ENCODE measurements at regions of chr14 and their contacts with region 1.

Region 1: DNA sequence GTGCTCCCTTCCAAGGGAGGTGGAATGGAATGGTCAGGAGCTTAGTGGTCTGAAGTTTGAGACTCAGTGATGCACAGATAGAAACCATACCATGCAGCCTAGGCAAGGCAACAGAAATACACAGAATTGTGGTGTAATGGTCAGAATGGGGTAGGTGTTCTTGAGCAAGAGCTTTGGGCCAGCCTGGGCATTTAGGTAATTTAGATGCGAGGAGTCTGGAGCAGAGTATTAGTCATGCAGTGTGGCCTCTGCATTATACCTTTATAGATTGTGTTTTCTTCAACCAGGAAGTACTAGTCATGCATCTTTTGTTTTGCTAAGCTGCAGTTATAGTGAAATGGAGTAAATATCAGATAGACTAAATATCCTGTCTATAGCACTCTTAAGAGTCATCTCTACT is 118.3 kb downstream of the DAAM1 start:
- DNase-seq: peak; percentile 90
- H3K4me3 ChIP-seq: no peak overlapping the region
- H3K27ac ChIP-seq: peak overlapping the region; percentile 89
- H3K4me1 ChIP-seq: peaks cover 51% of the 10 kb centered on the region
- H3K27me3 ChIP-seq: no peaks in the 10 kb centered on the region
- CTCF ChIP-seq: no peak
- POLR2A ChIP-seq: peak; percentile 20

Region 2: GRCh38 chr14:59126710-59127432 is 179.9 kb before region 1 on chr14:
- CTCF ChIA-PET with region 1: no interaction called
- POLR2A ChIA-PET with region 1: no interaction called
- dilution Hi-C with region 1: no loop called
- intact Hi-C with region 1: no loop called
- DNase-seq: peak; percentile 64
- H3K4me3 ChIP-seq: no peak overlapping the region
- H3K27ac ChIP-seq: no peak overlapping the region
- H3K4me1 ChIP-seq: no peaks in the 10 kb centered on the region
- H3K27me3 ChIP-seq: peaks cover 5 to 6% of the 10 kb centered on the region in 2 experiments
- CTCF ChIP-seq: peak; percentile 58 to 60
- POLR2A ChIP-seq: no peak

Region 3: GRCh38 chr14:59254942-59255545 is 51.7 kb before region 1 on chr14:
- CTCF ChIA-PET with region 1: no interaction called
- POLR2A ChIA-PET with region 1: no interaction called
- dilution Hi-C with region 1: no loop called
- intact Hi-C with region 1: no loop called
- DNase-seq: peak; percentile 44
- H3K4me3 ChIP-seq: no peak overlapping the region
- H3K27ac ChIP-seq: peak overlapping the region; percentile 42
- H3K4me1 ChIP-seq: peaks cover 16% of the 10 kb centered on the region
- H3K27me3 ChIP-seq: no peaks in the 10 kb centered on the region
- CTCF ChIP-seq: no peak
- POLR2A ChIP-seq: no peak

Region 4: GRCh38 chr14:59275653-59276052 is 31.1 kb before region 1 on chr14:
- CTCF ChIA-PET with region 1: interaction called, 5 read pairs
- POLR2A ChIA-PET with region 1: no interaction called
- dilution Hi-C with region 1: no loop called
- intact Hi-C with region 1: loop called (anchors 2 kb)
- DNase-seq: peak; percentile 89
- H3K4me3 ChIP-seq: no peak overlapping the region
- H3K27ac ChIP-seq: peak overlapping the region; percentile 60
- H3K4me1 ChIP-seq: peaks cover 43% of the 10 kb centered on the region
- H3K27me3 ChIP-seq: no peaks in the 10 kb centered on the region
- CTCF ChIP-seq: no peak
- POLR2A ChIP-seq: no peak

Region 5: GRCh38 chr14:59320763-59321640 is 14.2 kb after region 1 on chr14:
- CTCF ChIA-PET with region 1: interaction called, 14 read pairs
- POLR2A ChIA-PET with region 1: interaction called, 4 read pairs
- dilution Hi-C with region 1: no loop called
- intact Hi-C with region 1: loop called (anchors 1 kb)
- DNase-seq: peak; percentile 90
- H3K4me3 ChIP-seq: peak overlapping the region in 1 of 3 experiments; percentile 23
- H3K27ac ChIP-seq: peak overlapping the region; percentile 84
- H3K4me1 ChIP-seq: peaks cover 21% of the 10 kb centered on the region
- H3K27me3 ChIP-seq: no peaks in the 10 kb centered on the region
- CTCF ChIP-seq: no peak
- POLR2A ChIP-seq: peak; percentile 29

Region 6: DNA sequence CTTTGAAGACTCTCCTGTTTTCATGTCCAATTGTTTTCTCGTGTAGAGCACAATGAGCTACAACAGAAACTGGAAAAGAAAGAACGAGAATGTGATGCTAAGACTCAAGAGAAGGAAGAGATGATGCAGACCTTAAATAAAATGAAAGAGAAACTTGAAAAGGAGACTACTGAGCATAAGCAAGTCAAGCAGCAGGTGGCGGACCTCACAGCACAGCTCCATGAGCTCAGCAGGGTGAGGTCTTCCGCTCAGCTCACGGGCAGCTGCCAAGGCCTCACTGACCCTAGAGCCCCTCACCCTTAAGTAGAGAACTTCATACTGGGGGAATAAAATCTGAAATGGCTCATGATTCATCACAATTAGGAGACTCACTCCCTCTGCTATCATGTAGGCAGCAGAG is 23.7 kb after region 1 on chr14:
- CTCF ChIA-PET with region 1: interaction called, 6 read pairs
- POLR2A ChIA-PET with region 1: no interaction called
- dilution Hi-C with region 1: no loop called
- intact Hi-C with region 1: loop called (anchors 1 kb)
- DNase-seq: no peak
- H3K4me3 ChIP-seq: no peak overlapping the region
- H3K27ac ChIP-seq: no peak overlapping the region
- H3K4me1 ChIP-seq: peaks cover 33% of the 10 kb centered on the region
- H3K27me3 ChIP-seq: no peaks in the 10 kb centered on the region
- CTCF ChIP-seq: no peak
- POLR2A ChIP-seq: no peak

Region 7: DNA sequence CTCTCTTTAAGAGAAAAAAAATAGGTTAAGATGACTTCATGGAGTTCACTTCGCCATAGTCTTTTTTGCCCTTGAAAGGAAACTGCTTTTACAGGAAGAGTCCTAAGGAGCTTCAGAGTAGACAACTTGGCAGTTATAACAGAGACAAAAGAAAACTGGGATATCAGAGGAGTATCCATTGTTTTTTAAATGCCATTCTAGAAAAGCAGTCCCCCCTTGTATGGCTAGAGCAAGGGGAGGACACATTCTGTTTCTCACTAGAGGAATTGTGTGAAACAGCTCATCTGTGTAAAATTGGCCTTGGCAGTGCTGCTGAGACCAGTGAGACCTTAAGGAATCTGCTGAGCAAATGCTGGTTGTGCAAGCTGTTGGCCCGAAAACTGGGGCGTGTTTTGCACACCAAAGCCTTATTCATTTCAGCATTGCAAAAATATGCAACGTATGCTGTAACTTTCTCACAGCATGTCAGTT is 30.4 kb after region 1 on chr14:
- CTCF ChIA-PET with region 1: interaction called, 12 read pairs
- POLR2A ChIA-PET with region 1: no interaction called
- dilution Hi-C with region 1: no loop called
- intact Hi-C with region 1: loop called (anchors 1 kb)
- DNase-seq: peak; percentile 70
- H3K4me3 ChIP-seq: no peak overlapping the region
- H3K27ac ChIP-seq: peak overlapping the region; percentile 87
- H3K4me1 ChIP-seq: peaks cover 61% of the 10 kb centered on the region
- H3K27me3 ChIP-seq: no peaks in the 10 kb centered on the region
- CTCF ChIP-seq: no peak
- POLR2A ChIP-seq: no peak

Region 8: DNA sequence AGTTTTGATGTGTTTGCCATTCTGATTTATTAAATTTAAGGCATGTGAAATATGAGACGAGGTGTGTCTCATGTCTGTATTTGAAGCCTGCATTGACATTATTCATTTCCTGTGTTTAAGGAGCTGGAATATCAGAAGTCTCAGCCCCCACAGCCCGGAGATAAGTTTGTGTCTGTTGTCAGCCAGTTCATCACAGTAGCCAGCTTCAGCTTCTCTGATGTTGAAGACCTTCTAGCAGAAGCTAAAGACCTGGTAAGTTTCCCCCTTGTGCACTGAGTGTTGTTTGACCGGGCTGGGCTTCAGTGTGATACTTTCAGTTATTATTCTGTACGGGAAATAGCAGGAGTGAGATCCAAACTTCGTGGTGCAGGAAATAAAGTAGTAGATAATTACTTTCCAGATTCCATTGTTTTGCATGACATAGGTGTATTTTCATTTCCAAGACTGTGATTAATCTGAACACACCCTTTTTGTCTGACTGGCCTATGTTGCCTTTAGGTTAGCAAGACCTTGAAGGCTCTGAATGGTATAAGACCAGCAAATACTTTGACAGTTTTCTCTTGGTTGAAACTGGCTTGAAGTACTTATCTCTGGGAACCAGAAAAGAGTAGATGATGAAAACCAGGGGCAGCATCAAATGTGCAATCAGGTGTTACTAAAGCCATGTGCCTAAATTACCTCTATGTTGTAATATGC is 56.9 kb after region 1 on chr14:
- CTCF ChIA-PET with region 1: no interaction called
- POLR2A ChIA-PET with region 1: no interaction called
- dilution Hi-C with region 1: no loop called
- intact Hi-C with region 1: loop called (anchors 2 kb)
- DNase-seq: peak; percentile 74
- H3K4me3 ChIP-seq: peak overlapping the region in 1 of 3 experiments; percentile 40
- H3K27ac ChIP-seq: peak overlapping the region; percentile 73
- H3K4me1 ChIP-seq: peaks cover 43% of the 10 kb centered on the region
- H3K27me3 ChIP-seq: no peaks in the 10 kb centered on the region
- CTCF ChIP-seq: no peak
- POLR2A ChIP-seq: no peak

Measured in endothelial cell of umbilical vein (primary cell).